GM12878 (cell line): ENCODE measurements at regions of chr17 and their contacts with region 1.

Region 1: DNA sequence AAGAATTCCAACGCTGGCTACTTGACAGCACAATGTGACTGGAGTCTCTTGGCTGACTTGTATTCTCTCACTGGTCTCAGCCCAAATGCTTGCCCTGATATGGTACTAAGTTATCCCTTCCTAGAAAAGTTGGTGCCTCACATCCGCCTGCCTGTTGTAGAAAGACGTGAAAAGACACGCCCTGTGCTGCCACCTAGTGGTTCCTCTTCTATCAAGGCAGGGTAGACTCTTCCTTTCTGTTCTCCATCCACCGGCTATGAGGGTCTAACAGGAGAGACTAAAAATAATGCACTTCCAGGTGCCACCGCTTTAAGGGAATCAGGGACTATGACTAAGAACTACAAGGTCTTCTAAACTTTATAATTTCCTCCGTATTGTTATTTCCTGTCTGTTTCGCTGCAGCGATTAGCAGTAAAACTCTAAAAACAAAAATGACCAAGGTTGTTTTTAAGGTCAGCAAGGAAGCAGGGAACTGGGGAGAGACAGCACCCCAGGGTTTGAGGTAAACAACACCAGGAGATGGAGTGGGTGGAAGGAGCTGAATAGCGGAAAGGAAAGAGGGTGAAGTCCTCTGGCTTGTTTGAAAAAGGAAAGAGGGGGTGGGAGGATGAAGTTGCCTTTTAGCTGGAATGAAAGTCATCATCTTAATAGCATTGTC is 109.5 kb downstream of the YPEL2 start:
- DNase-seq: peak; percentile 68
- ATAC-seq: peak; percentile 99
- H3K4me3 ChIP-seq: peak overlapping the region; percentile 34; the same call in 1 of the 2 replicates
- H3K27ac ChIP-seq: no peak overlapping the region
- H3K4me1 ChIP-seq: peaks cover 25% of the 10 kb centered on the region
- H3K27me3 ChIP-seq: no peaks in the 10 kb centered on the region
- CTCF ChIP-seq: peak; percentile 74 to 90 (median 86)
- EP300 ChIP-seq: no peak
- POLR2A ChIP-seq: no peak
- RAD21 ChIP-seq: peak; percentile 97

Region 2: DNA sequence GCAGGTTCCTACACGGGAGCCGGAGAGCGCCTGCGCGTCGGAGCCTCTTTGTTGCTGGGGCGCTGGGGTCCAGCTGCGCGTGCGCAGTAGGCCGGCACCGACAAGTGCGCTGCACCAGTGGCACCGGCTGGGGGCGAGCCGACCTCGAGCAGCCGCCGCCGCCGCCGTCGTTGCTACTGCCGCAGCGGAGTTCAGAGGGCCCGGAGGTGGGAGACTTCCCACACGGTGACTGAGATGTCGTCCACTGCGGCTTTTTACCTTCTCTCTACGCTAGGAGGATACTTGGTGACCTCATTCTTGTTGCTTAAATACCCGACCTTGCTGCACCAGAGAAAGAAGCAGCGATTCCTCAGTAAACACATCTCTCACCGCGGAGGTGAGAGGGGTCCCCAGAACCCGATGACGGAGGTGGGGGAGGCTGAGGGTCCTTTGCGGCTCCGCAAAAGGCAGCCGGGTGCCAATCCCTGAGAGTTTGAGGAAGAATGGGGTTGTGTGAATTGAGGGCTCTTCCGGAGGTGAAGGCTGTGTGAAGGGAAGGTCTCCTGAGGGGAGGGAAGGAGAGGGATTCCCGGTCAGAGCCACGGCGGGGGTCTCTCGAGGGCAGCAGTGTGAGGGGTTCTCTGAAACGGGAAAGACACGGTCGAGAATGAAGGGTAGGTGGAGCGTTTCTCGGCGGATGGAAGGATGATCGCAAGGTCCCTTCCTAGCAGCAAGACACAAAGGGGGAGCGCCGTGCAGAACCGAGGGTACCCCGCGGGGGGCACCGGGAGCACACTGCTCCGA is 220.3 kb before region 1 on chr17 and contains the start of gene GDPD1:
- CTCF ChIA-PET with region 1: interaction called, 32 read pairs
- POLR2A ChIA-PET with region 1: no interaction called
- RAD21 ChIA-PET with region 1: interaction called, 30 read pairs
- SMC1A ChIA-PET with region 1: interaction called, 12 read pairs
- in situ Hi-C with region 1: no loop called
- intact Hi-C with region 1: loop called (anchors 5 kb)
- DNase-seq: peak; percentile 76
- ATAC-seq: peak; percentile 99
- H3K4me3 ChIP-seq: peak within 1 kb of the TSS; percentile 95
- H3K27ac ChIP-seq: peak within 1 kb of the TSS; percentile 42; the same call in 1 of the 2 replicates
- H3K4me1 ChIP-seq: no peaks in the 10 kb centered on the region
- H3K27me3 ChIP-seq: no peaks in the 10 kb centered on the region
- CTCF ChIP-seq: peak; percentile 62 to 89 (median 68)
- EP300 ChIP-seq: no peak
- POLR2A ChIP-seq: peak; percentile 75
- RAD21 ChIP-seq: peak; percentile 50
- polyA plus RNA-seq, gene GDPD1: 0.18 to 0.40 TPM

Region 3: DNA sequence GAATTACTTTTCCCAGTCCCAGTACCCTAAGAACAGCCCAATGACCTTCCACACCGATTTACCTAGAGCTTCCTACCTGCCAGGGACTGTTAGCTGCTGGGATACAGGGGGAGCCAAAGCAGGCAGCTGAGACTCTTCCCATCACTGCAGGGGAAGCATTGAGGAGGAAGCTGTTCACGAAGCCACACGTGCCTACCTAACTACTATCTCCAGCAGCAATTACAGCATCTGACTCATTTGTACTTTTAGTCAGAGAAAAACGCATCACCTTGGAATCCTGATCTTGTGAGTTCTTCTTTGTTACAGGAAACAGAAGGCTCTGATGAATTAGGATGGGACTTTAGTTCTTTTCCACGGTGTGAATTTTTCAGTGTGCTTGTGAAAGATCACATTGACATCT is 10.8 kb after region 1 on chr17:
- CTCF ChIA-PET with region 1: interaction called, 18 read pairs
- POLR2A ChIA-PET with region 1: interaction called, 4 read pairs
- RAD21 ChIA-PET with region 1: interaction called, 7 read pairs
- SMC1A ChIA-PET with region 1: interaction called, 5 read pairs
- in situ Hi-C with region 1: no loop called
- intact Hi-C with region 1: no loop called
- DNase-seq: no peak
- ATAC-seq: no peak
- H3K4me3 ChIP-seq: no peak overlapping the region
- H3K27ac ChIP-seq: no peak overlapping the region
- H3K4me1 ChIP-seq: no peaks in the 10 kb centered on the region
- H3K27me3 ChIP-seq: no peaks in the 10 kb centered on the region
- CTCF ChIP-seq: no peak
- EP300 ChIP-seq: no peak
- POLR2A ChIP-seq: no peak
- RAD21 ChIP-seq: no peak